MCF 10A (cell line): ENCODE measurements at regions of chr5 and their contacts with region 1.

Region 1: DNA sequence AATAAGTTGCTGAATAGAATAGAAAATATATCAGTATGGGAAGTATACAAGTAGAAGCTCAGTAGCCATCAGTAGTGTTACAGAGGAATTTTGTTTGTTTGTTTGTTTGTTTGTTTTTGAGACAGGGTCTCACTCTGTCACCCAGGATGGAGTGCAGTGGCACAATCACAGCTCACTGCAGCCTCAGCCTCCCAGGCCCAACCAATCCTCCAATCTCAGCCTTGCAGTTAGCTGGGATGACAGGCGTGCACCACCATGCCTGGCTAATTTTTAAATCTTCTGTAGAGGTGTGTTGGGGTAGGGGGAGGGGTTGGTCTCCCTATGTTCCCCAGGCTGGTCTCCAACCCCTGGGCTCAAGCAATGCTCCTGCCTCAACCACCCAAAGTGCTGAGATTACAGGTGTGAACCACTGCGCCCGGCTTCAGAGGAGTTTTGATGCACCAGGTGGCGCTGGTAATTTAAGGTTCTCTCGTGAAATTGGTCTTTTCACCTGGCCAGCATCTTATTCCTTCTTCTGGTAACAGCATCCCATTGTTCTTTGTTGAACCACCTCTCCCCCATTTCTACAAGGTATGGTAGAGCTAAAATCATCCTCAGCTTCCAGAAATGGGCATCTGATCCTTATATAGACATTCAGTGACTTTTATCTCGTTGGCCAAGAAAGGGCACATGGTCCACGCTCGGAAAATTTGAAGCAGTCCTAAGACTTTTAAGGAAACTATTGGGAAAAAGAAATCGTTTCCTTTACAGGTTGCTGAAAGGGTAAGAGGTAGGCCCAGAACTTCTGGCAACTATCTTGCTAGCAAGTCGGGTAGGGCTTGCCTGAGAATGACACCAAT is 157.1 kb downstream of the ARRDC3 start:
- DNase-seq: peak; percentile 70
- H3K4me3 Mint-ChIP-seq: no peak overlapping the region
- H3K27ac Mint-ChIP-seq: no peak overlapping the region
- H3K4me1 Mint-ChIP-seq: peaks cover 22% of the 10 kb centered on the region
- H3K27me3 Mint-ChIP-seq: no peaks in the 10 kb centered on the region
- CTCF ChIP-seq: peak; percentile 65

Region 2: GRCh38 chr5:91101600-91102379 is 124.3 kb before region 1 on chr5:
- CTCF ChIA-PET with region 1: interaction called, 9 read pairs
- POLR2A ChIA-PET with region 1: no interaction called
- intact Hi-C with region 1: loop called (anchors 1 kb)
- DNase-seq: peak; percentile 83
- H3K4me3 Mint-ChIP-seq: no peak overlapping the region
- H3K27ac Mint-ChIP-seq: no peak overlapping the region
- H3K4me1 Mint-ChIP-seq: peaks cover 25% of the 10 kb centered on the region
- H3K27me3 Mint-ChIP-seq: no peaks in the 10 kb centered on the region
- CTCF ChIP-seq: peak; percentile 87

Region 3: GRCh38 chr5:91366571-91366970 is 140.5 kb after region 1 on chr5:
- CTCF ChIA-PET with region 1: interaction called, 12 read pairs
- POLR2A ChIA-PET with region 1: interaction called, 13 read pairs
- intact Hi-C with region 1: no loop called
- DNase-seq: no peak
- H3K4me3 Mint-ChIP-seq: no peak overlapping the region
- H3K27ac Mint-ChIP-seq: no peak overlapping the region
- H3K4me1 Mint-ChIP-seq: peaks cover 1% of the 10 kb centered on the region
- H3K27me3 Mint-ChIP-seq: no peaks in the 10 kb centered on the region
- CTCF ChIP-seq: no peak

Region 4: GRCh38 chr5:91388362-91388761 is 162.3 kb after region 1 on chr5:
- CTCF ChIA-PET with region 1: interaction called, 91 read pairs
- POLR2A ChIA-PET with region 1: interaction called, 48 read pairs
- intact Hi-C with region 1: loop called (anchors 1 kb)
- DNase-seq: no peak
- H3K4me3 Mint-ChIP-seq: no peak overlapping the region
- H3K27ac Mint-ChIP-seq: no peak overlapping the region
- H3K4me1 Mint-ChIP-seq: no peaks in the 10 kb centered on the region
- H3K27me3 Mint-ChIP-seq: no peaks in the 10 kb centered on the region
- CTCF ChIP-seq: no peak